ENCODE measurements at regions of chr1 and their contacts with region 1.

Region 1: GRCh38 chr1:41416552-41417334 is 55.5 kb downstream of the FOXO6 start:
- DNase-seq: peak; percentile 73 to 81
- H3K4me3 ChIP-seq: no peak overlapping the region
- H3K27ac ChIP-seq: no peak overlapping the region
- H3K4me1 ChIP-seq: peaks cover 39% of the 10 kb centered on the region
- H3K27me3 ChIP-seq: no peaks in the 10 kb centered on the region
- CTCF ChIP-seq: peak; percentile 95

Region 2: DNA sequence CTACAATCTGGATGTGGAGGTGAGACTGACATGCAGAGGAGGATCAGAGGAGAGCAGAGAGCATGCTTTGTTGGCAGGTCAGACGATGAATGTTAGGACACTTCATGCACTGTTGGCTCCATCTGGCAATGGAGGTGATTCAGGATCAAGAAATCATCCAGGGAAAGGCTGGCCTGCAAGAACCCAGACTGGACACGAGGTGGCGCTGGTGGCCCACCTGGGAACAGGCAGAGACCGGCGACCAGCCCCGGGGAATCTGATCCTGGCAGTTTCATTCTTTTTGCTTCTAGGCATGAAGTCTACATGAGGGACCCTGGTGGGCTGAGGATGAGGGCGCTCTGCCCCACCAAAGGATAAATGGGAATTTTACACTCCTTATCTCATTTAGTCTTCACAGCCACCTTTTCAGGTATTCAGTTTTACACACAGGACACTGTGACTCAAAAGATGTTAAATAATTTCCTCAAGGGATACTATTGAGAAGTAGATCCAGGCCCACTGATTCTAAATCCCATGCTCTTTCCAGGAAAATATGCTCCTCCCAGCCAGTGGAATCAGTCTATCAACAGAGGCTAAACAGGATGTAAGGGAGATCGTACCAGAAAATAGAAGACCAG is 148.5 kb before region 1 on chr1:
- CTCF ChIA-PET with region 1: no interaction called
- POLR2A ChIA-PET with region 1: no interaction called
- intact Hi-C with region 1: loop called (anchors 1 kb)
- DNase-seq: peak; percentile 50 to 81
- H3K4me3 ChIP-seq: no peak overlapping the region
- H3K27ac ChIP-seq: no peak overlapping the region
- H3K4me1 ChIP-seq: no peaks in the 10 kb centered on the region
- H3K27me3 ChIP-seq: no peaks in the 10 kb centered on the region
- CTCF ChIP-seq: peak; percentile 96

Region 3: DNA sequence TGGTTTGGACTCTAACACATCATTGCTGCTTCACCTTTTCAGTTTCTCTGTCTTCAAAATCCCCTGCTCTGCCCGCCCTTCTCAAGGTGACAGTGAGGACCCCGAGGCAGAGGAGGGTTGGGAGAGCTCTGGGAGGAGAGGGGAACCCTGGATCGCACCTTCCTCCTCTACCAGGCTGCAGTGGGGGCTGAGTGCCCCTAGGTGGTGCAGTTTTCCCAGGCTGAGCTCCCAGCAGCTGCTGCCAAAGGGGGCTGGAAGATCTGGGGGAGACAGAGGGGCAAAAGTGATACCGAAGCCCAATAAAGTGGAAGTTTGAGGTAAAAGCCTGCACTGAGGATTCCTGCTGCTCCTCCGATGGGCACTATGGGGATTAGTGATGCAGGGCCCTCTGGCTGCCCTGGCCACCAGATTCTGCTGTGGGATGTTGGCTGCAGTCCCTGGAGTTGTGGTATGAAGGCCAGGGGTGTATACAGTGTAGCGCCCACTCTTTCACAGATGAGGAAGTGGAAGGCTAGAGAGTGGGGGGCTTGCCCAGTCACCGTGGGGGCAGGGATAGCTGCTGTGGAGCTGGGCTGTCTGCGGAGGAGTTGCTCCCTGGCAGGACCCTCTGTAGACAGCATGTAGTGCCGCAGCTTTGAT is 133.9 kb before region 1 on chr1:
- CTCF ChIA-PET with region 1: no interaction called
- POLR2A ChIA-PET with region 1: interaction called, 4 read pairs
- intact Hi-C with region 1: loop called (anchors 1 kb)
- DNase-seq: peak in 1 of 2 experiments; percentile 54
- H3K4me3 ChIP-seq: no peak overlapping the region
- H3K27ac ChIP-seq: no peak overlapping the region
- H3K4me1 ChIP-seq: no peaks in the 10 kb centered on the region; the same call in 1 of the 2 replicates
- H3K27me3 ChIP-seq: peaks cover 6% of the 10 kb centered on the region; the same call in 1 of the 2 replicates
- CTCF ChIP-seq: peak; percentile 87

Region 4: GRCh38 chr1:41381692-41382477 is 34.9 kb before region 1 on chr1:
- CTCF ChIA-PET with region 1: no interaction called
- POLR2A ChIA-PET with region 1: interaction called, 4 read pairs
- intact Hi-C with region 1: loop called (anchors 2 kb)
- DNase-seq: peak in 1 of 2 experiments; percentile 81
- H3K4me3 ChIP-seq: peak overlapping the region; percentile 91
- H3K27ac ChIP-seq: peak overlapping the region; percentile 82
- H3K4me1 ChIP-seq: peaks cover 28% of the 10 kb centered on the region
- H3K27me3 ChIP-seq: no peaks in the 10 kb centered on the region
- CTCF ChIP-seq: no peak

Region 5: GRCh38 chr1:41528741-41529605 is 112.2 kb after region 1 on chr1:
- CTCF ChIA-PET with region 1: no interaction called
- POLR2A ChIA-PET with region 1: no interaction called
- intact Hi-C with region 1: no loop called
- DNase-seq: no peak
- H3K4me3 ChIP-seq: no peak overlapping the region
- H3K27ac ChIP-seq: no peak overlapping the region
- H3K4me1 ChIP-seq: no peaks in the 10 kb centered on the region
- H3K27me3 ChIP-seq: no peaks in the 10 kb centered on the region
- CTCF ChIP-seq: no peak

Region 6: GRCh38 chr1:41573785-41574713 is 157.3 kb after region 1 on chr1:
- CTCF ChIA-PET with region 1: no interaction called
- POLR2A ChIA-PET with region 1: no interaction called
- intact Hi-C with region 1: no loop called
- DNase-seq: peak; percentile 58 to 80
- H3K4me3 ChIP-seq: no peak overlapping the region
- H3K27ac ChIP-seq: no peak overlapping the region
- H3K4me1 ChIP-seq: peaks cover 5% of the 10 kb centered on the region
- H3K27me3 ChIP-seq: no peaks in the 10 kb centered on the region
- CTCF ChIP-seq: peak; percentile 93